Colonic mucosa (tissue), 4 donors: ENCODE measurements at regions of chr14 and their contacts with region 1.

Region 1: GRCh38 chr14:61025251-61026223 is 44.5 kb downstream of the SLC38A6 start:
- DNase-seq: peak; percentile 60
- H3K4me3 ChIP-seq: no peak overlapping the region
- H3K27ac ChIP-seq: no peak overlapping the region
- H3K4me1 ChIP-seq: no peaks in the 10 kb centered on the region
- H3K27me3 ChIP-seq: no peaks in the 10 kb centered on the region
- CTCF ChIP-seq: peak; percentile 79

Region 2: DNA sequence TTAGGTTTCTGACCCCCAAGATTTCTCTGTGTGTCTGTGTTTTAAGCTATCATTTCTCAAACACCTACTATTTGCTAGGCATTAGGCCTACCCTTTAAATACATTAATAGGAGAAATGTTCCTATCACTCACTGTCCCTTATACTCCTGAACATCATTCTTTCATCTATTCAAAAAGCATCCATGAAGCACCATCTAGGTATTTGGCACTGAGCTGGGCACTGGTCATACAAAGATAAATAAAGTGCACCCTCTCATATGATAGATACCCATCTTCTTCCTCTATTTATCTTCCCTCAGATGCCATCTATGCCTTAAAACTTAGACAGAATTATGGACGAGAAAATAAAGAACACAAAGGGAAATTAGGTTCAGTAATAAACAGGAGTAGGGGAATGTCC is 396.6 kb before region 1 on chr14:
- intact Hi-C with region 1: loop called (anchors 5 kb)
- DNase-seq: no peak
- H3K4me3 ChIP-seq: no peak overlapping the region
- H3K27ac ChIP-seq: no peak overlapping the region
- H3K4me1 ChIP-seq: no peaks in the 10 kb centered on the region
- H3K27me3 ChIP-seq: no peaks in the 10 kb centered on the region
- CTCF ChIP-seq: no peak

Region 3: DNA sequence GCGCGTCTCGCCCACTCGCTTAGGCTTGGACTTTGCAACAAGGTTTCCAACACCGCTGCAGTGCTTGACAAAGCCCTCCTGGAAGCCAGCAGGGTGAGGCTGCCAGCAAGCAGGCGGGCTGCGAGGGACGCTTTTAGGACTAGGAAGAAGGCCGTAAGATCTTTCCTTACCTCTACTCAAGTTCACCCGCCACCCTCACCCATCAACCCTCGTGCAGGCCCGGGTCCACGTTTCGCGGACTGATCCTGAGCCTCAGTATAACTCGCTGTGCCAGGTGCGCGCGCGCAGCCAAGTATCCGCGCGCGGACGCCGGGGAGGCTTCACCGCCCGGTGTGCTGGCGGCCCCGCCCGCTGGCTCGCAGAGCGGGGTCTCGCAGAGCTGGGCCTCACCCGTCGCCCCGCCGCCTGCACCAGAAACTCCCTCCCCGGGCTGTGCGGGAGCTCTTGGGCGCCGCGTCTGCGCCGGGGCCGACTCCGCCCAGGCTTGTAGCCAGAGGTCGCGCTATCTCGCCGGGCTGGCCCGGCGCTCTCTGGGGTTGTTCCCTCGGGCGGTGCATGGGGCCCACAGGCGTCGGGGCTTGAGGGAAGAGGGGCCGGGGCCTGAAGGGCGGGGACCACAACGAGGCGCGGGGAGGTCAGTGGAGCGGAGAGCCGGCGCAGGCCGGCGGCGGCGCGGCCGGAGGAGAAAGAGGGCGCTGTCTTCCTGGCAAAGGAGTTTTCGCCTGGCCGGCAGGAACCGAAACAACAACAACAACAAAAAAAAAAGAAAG is 368.7 kb before region 1 on chr14:
- intact Hi-C with region 1: loop called (anchors 10 kb)
- DNase-seq: peak; percentile 51
- H3K4me3 ChIP-seq: peak overlapping the region; percentile 65
- H3K27ac ChIP-seq: no peak overlapping the region
- H3K4me1 ChIP-seq: peaks cover 5% of the 10 kb centered on the region
- H3K27me3 ChIP-seq: peaks cover 79% of the 10 kb centered on the region
- CTCF ChIP-seq: no peak

Region 4: DNA sequence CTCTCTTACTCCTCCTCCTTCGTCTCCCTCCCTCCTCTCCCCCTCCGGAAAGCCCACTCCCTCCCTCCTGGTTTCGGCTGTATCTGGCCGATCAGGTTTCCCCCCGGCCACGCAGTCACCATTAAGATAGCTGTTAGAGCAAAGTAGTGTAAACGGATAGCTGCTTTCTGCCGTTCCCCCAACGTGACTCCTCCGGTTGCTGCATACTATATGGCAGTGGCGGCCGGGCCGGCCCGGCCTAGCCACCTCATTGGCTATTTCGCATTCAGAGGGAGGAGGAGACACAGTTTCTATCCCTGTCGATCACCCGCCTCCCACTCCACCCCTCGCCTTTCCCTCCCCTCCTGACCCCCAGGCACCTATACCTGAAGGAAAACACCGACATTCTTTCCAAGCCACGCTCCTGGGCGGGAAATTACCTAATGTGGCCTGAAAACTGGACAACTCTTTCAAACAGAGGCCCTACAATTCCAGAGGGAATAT is 301.4 kb before region 1 on chr14 and contains the start of gene SIX4:
- intact Hi-C with region 1: loop called (anchors 10 kb)
- DNase-seq: peak; percentile 56
- H3K4me3 ChIP-seq: peak within 1 kb of the TSS; percentile 58
- H3K27ac ChIP-seq: no peak within 1 kb of the TSS
- H3K4me1 ChIP-seq: peaks cover 7% of the 10 kb centered on the region
- H3K27me3 ChIP-seq: peaks cover 61% of the 10 kb centered on the region
- CTCF ChIP-seq: no peak
- total RNA-seq, gene SIX4: 0.15 to 0.27 TPM

Region 5: GRCh38 chr14:61252369-61253063 is 227.0 kb after region 1 on chr14:
- intact Hi-C with region 1: loop called (anchors 5 kb)
- DNase-seq: peak; percentile 66
- H3K4me3 ChIP-seq: no peak overlapping the region
- H3K27ac ChIP-seq: no peak overlapping the region
- H3K4me1 ChIP-seq: no peaks in the 10 kb centered on the region
- H3K27me3 ChIP-seq: no peaks in the 10 kb centered on the region
- CTCF ChIP-seq: peak; percentile 71